ENCODE measurements at regions of chr2 and their contacts with region 1.

Region 1: DNA sequence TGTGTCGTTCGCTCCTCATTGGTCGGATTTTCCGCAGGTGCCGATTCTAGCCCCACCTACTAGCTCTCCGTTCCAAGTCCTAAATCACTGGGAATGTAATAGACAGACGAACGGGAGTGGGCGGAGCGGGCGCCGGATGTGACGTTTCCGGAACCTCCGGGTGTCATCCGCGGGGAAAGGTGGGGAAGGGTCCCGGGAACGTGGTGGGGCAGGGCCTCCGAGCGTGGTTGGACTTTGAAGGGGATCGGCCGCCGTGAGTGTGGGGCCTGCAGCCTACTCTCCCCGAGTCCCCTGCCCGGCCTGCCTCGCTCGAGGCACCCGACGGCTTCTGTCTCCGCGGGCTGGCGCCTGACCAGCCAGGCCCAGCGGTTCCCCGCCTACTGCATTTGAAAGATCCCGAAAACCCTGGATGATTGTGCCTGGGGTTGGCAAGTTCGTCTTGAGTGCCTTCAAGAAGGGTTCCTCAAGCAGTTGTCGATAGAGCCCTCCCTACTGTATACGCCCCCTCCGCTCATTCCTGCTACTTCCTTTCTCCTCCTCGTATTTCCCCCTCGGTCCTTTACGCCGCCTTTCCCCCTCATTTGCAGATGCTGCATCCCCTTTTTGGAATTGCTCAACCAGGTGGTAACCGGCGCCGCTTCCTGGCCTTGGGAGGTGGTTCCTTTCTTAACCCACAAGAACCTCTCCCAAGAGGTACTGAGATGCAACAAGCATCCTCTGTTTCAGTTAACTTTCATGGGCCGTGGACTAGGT is at the start of gene STAMBP:
- DNase-seq: peak; percentile 95
- H3K4me3 Mint-ChIP-seq: peak within 1 kb of the TSS; percentile 96
- H3K27ac Mint-ChIP-seq: peak within 1 kb of the TSS; percentile 91
- H3K4me1 Mint-ChIP-seq: peaks cover 53% of the 10 kb centered on the region
- H3K27me3 Mint-ChIP-seq: no peaks in the 10 kb centered on the region
- total RNA-seq, gene STAMBP: 79.9 to 85.3 TPM

Region 2: GRCh38 chr2:73852020-73852419 is 23.0 kb after region 1 on chr2:
- CTCF ChIA-PET with region 1: interaction called, 6 read pairs
- POLR2A ChIA-PET with region 1: no interaction called
- intact Hi-C with region 1: loop called (anchors 1 kb)
- DNase-seq: no peak
- H3K4me3 Mint-ChIP-seq: no peak overlapping the region
- H3K27ac Mint-ChIP-seq: no peak overlapping the region
- H3K4me1 Mint-ChIP-seq: peaks cover 19% of the 10 kb centered on the region
- H3K27me3 Mint-ChIP-seq: no peaks in the 10 kb centered on the region

Region 3: GRCh38 chr2:73907840-73908452 is 79.0 kb after region 1 on chr2:
- CTCF ChIA-PET with region 1: interaction called, 12 read pairs
- POLR2A ChIA-PET with region 1: no interaction called
- intact Hi-C with region 1: no loop called
- DNase-seq: peak; percentile 75
- H3K4me3 Mint-ChIP-seq: no peak overlapping the region
- H3K27ac Mint-ChIP-seq: no peak overlapping the region
- H3K4me1 Mint-ChIP-seq: peaks cover 7% of the 10 kb centered on the region
- H3K27me3 Mint-ChIP-seq: no peaks in the 10 kb centered on the region

Region 4: DNA sequence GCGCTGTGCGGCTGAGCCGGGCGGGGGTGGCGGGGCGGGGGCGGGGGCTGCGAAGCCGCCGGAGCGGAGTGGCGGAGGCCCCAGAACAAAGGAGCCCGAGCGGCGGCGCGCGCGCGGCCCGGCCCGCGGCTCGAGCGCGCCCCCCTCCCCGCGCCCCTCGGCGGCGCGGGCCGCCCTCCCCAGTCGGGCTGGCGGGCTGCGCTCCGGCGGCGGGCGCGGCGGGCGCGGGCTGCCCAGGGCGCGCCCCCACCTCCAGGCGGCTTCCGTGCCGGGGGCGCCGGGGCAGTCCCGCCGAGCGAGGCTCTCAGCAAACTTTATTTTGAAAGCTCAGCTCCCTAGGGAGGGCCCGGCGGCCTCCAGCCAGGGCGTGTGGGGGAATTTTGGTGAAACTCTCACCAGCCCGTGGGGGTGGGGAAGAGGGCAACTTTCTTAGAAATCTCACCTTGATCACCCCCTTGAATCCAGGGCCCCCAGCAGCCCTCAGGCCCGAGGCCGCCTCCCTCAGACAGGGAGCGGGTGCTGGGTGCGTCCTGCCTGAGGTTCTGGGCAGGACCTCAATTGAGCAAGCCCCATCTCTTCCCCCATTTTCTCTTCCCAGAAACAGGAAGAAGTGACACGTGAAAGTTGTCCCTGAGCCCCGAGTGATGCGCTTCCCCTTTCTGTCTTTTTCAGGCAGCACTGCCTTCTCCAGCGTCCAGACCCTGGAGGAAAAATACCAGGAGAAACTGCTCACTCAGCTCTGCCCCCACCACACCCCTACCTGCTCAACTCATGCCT is 156.5 kb after region 1 on chr2:
- CTCF ChIA-PET with region 1: interaction called, 32 read pairs
- POLR2A ChIA-PET with region 1: interaction called, 3 read pairs
- intact Hi-C with region 1: loop called (anchors 1 kb)
- DNase-seq: peak; percentile 80
- H3K4me3 Mint-ChIP-seq: peak overlapping the region; percentile 82
- H3K27ac Mint-ChIP-seq: peak overlapping the region; percentile 95
- H3K4me1 Mint-ChIP-seq: peaks cover 71% of the 10 kb centered on the region
- H3K27me3 Mint-ChIP-seq: no peaks in the 10 kb centered on the region

Region 5: DNA sequence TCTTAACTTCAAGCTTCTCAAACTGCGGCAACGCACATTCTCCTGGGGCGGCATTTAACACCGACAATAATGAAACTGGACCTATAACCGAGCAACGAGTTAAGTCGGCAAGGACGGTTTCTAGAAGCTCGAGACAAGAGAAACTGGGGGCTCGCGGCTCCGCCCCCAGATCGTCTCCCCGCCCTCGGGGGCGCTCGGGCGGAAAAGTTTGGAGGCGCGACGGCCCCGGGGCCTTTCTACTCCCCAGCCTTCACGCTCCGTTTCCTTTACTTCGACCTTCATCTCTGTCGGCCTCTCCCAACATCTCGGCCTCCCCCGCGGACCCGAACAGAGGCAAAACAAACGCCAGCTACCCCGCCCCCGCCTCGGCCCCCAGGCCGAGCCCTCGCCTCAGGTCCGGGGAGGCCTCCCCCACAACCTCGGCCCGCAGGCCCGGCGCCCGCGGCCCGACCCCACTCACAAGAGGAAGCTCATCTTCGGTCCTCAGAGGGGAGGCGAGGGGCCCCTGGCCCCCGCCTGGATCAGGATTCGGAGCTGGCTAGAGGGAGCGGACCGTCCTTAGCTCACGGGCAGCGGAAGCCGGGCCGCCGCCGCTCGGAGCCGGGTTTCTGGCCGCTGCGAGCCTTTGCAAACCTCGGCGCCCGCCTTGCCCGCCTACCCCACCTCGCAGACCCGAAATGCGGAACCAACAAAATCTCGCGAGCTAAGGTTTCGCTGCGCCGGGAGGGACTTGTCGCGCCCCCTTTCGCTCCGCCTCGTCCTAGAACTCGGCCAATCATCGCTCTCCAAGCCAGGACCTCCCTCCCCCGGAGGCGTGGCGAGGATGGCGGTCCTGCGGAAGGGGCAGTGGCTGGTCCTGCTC is 349.4 kb after region 1 on chr2 and contains the start of gene MOB1A:
- CTCF ChIA-PET with region 1: interaction called, 18 read pairs
- POLR2A ChIA-PET with region 1: interaction called, 4 read pairs
- intact Hi-C with region 1: no loop called
- DNase-seq: peak; percentile 99
- H3K4me3 Mint-ChIP-seq: peak within 1 kb of the TSS; percentile 83
- H3K27ac Mint-ChIP-seq: peak within 1 kb of the TSS; percentile 76
- H3K4me1 Mint-ChIP-seq: peaks cover 45% of the 10 kb centered on the region
- H3K27me3 Mint-ChIP-seq: no peaks in the 10 kb centered on the region
- total RNA-seq, gene MOB1A: 159 to 170 TPM

Region 6: DNA sequence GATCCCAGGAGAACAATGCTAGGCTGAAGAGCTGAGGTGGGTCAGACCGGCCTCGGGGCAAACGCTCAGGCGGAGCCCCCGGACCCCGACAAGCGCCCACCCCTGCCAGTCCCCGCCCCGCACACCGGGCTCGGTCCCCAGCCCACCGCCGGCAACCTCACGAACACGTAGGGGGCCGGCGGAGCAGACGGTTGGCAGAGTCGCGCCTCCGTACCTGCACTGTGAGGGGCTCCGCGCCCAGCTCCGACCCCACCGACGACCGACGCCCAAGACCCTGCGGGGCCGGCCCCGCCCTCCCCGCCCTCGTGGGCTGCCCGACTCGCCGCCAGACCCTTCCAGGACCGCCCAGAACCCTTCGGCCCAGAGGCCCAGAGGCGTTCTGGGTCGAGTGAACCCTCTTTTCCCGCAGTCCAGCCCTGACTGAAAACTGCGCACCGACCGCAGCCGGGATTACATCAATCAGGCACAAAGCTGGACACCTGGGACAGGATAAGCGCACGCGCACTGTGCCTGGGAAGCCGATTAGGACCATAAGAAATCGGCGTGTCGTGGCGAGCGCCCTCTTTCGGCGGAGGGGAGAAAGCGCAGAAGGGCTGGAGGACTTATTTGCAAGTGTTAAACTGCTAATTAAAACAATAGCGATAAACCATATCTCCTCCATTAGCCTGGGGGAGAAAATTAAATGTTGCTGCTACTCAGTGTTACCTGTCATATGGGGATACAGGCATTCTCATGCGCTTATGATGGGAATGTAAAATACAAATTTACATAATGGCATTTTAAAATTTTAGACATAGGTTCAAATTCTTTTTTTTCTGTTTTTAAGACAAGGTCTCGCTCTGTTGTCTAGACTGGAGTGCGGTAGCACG is 562.8 kb after region 1 on chr2:
- CTCF ChIA-PET with region 1: interaction called, 4 read pairs
- POLR2A ChIA-PET with region 1: no interaction called
- intact Hi-C with region 1: loop called (anchors 10 kb)
- DNase-seq: peak; percentile 95
- H3K4me3 Mint-ChIP-seq: peak overlapping the region; percentile 92
- H3K27ac Mint-ChIP-seq: peak overlapping the region; percentile 96
- H3K4me1 Mint-ChIP-seq: peaks cover 4% of the 10 kb centered on the region
- H3K27me3 Mint-ChIP-seq: no peaks in the 10 kb centered on the region

Region 7: DNA sequence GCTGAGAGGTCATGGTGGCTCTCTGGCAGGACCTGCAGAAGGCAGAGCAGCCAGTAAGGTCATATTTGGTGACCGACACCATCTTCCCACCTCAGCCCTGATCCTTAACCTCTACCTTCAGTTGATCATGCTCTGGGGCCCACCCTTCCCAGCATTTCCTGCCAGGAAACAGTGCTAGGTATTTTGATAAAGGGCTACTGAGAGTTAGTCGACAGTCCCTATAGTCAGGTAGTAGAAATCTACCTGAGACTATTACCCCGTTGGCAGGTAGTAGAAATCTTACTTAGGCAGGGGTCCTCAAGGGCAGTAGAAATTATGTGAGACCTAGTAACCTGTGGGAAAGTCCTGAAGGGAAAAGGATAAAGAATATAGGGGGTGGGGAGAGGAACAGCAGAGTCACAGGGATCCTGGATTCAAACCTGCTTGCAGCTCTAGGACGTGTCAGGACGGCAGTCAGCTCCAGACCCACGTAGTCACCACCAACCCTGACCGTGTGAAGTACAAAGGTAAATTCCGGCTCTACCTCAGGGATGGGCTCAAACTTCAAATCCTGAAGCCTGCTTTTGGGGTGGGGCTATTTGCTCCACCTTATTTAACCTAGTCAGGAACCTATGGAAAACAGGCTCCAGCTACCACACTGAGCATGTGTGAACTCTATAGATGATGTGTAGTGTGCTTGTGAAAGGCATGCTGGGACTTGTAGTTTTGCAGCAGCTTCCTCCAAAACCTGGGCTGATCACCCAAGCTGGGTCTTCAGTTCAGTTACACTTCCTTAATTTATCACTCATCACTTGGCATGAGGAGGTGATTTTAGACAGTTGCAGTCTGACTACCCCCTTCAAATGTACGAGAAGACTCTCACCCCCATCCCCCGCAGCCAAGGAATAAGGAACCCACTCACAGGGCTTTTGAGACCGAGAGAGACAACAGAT is 697.0 kb after region 1 on chr2 and contains the start of gene DQX1:
- CTCF ChIA-PET with region 1: no interaction called
- POLR2A ChIA-PET with region 1: no interaction called
- intact Hi-C with region 1: no loop called
- DNase-seq: no peak
- H3K4me3 Mint-ChIP-seq: no peak within 1 kb of the TSS
- H3K27ac Mint-ChIP-seq: no peak within 1 kb of the TSS
- H3K4me1 Mint-ChIP-seq: peaks cover 25% of the 10 kb centered on the region
- H3K27me3 Mint-ChIP-seq: no peaks in the 10 kb centered on the region
- total RNA-seq, gene DQX1: 0.33 to 0.56 TPM